Heart right ventricle (tissue), 16 donors: ENCODE measurements at regions of chr16 and their contacts with region 1.

Region 1: GRCh38 chr16:90077226-90077756 is at the start of gene PRDM7:
- DNase-seq: peak; percentile 93 to 94
- ATAC-seq: peak; percentile 96 to 99 (median 98)
- H3K4me3 ChIP-seq: peak within 1 kb of the TSS in 9 of 10 donors; percentile 5 to 59 (median 51)
- H3K27ac ChIP-seq: peak within 1 kb of the TSS in 3 of 10 donors; percentile 15 to 60 (median 46)
- H3K4me1 ChIP-seq: peaks cover 0 to 23% (median 0%) of the 10 kb centered on the region in 9 donors
- H3K27me3 ChIP-seq: peaks cover 0 to 17% (median 0%) of the 10 kb centered on the region in 7 donors
- CTCF ChIP-seq: no peak
- total RNA-seq, gene PRDM7: not detected

Region 2: GRCh38 chr16:89893642-89894509 is 183.4 kb before region 1 on chr16:
- intact Hi-C with region 1: no loop called
- DNase-seq: no peak
- ATAC-seq: peak in 2 of 8 donors; percentile 25 to 53
- H3K4me3 ChIP-seq: no peak overlapping the region
- H3K27ac ChIP-seq: no peak overlapping the region
- H3K4me1 ChIP-seq: peaks cover 0 to 10% (median 0%) of the 10 kb centered on the region in 9 donors
- H3K27me3 ChIP-seq: no peaks in the 10 kb centered on the region
- CTCF ChIP-seq: no peak

Region 3: GRCh38 chr16:89909777-89910716 is 167.2 kb before region 1 on chr16:
- intact Hi-C with region 1: loop called in 1 of 10 experiments (anchors 5 kb)
- DNase-seq: peak; percentile 80 to 85
- ATAC-seq: peak; percentile 75 to 90 (median 85)
- H3K4me3 ChIP-seq: no peak overlapping the region
- H3K27ac ChIP-seq: peak overlapping the region in 5 of 10 donors; percentile 2 to 64 (median 42)
- H3K4me1 ChIP-seq: peaks cover 0 to 14% (median 9%) of the 10 kb centered on the region in 9 donors
- H3K27me3 ChIP-seq: no peaks in the 10 kb centered on the region
- CTCF ChIP-seq: peak; percentile 85 to 98 (median 92)